Activated naive CD4-positive, alpha-beta T cell treated with anti-CD3 and anti-CD28 coated beads for 36 hours (primary cell): ENCODE measurements at regions of chr1 and their contacts with region 1.

Region 1: GRCh38 chr1:244272471-244273261 is 179.0 kb downstream of the ADSS2 start:
- DNase-seq: peak; percentile 84
- H3K4me3 Mint-ChIP-seq: no peak overlapping the region
- H3K27ac Mint-ChIP-seq: no peak overlapping the region
- H3K4me1 Mint-ChIP-seq: no peaks in the 10 kb centered on the region
- H3K27me3 Mint-ChIP-seq: no peaks in the 10 kb centered on the region

Region 2: GRCh38 chr1:243343970-243344937 is 928.4 kb before region 1 on chr1:
- CTCF ChIA-PET with region 1: interaction called, 13 read pairs
- intact Hi-C with region 1: loop called (anchors 1 kb)
- DNase-seq: no peak
- H3K4me3 Mint-ChIP-seq: no peak overlapping the region
- H3K27ac Mint-ChIP-seq: no peak overlapping the region
- H3K4me1 Mint-ChIP-seq: peaks cover 2% of the 10 kb centered on the region
- H3K27me3 Mint-ChIP-seq: no peaks in the 10 kb centered on the region

Region 3: GRCh38 chr1:243708210-243708609 is 564.5 kb before region 1 on chr1:
- CTCF ChIA-PET with region 1: interaction called, 5 read pairs
- intact Hi-C with region 1: loop called (anchors 1 kb)
- DNase-seq: no peak
- H3K4me3 Mint-ChIP-seq: no peak overlapping the region
- H3K27ac Mint-ChIP-seq: no peak overlapping the region
- H3K4me1 Mint-ChIP-seq: peaks cover 9% of the 10 kb centered on the region
- H3K27me3 Mint-ChIP-seq: no peaks in the 10 kb centered on the region

Region 4: DNA sequence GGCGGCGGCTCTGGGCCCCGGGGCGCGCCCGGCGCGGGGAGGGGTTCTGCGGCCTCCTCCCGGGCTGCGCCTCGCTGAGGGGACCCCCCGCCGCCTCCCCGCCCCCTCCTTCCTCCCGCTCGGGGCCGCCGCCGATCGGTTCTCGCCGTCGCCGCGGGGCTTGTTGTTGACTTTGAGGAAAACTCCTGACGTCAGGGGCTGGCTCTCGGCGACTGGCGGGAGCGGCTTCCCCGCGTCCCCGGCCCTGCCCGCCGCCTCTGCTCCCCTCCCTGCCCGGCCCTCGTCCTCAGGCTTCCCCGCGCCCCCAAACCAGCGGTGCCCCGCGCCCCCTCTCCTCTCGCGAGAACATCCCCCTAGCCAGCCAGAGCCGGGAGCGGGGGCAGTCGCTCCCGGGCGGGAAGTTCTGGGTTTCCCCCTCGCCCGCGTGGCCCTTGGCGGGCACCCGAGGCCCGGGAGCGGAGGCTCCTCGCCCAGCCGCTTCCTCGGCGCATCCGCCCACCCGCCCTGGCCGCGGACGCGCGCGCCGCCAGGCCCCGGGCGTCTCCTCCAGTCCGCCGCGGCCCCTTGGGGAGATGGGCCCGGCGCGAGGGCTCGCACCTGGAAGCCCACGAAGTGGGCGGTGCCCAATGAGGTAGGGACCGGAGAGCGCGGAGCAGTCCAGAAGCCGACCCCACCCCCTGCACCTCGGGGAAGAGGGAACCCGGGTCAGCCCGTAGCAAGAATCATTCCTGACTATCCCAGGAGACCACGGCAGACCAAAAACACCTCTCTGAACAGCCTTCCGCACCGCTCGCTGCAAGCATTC is 422.0 kb before region 1 on chr1:
- CTCF ChIA-PET with region 1: no interaction called
- intact Hi-C with region 1: loop called (anchors 1 kb)
- DNase-seq: peak; percentile 86
- H3K4me3 Mint-ChIP-seq: peak overlapping the region; percentile 80
- H3K27ac Mint-ChIP-seq: peak overlapping the region; percentile 81
- H3K4me1 Mint-ChIP-seq: peaks cover 30% of the 10 kb centered on the region
- H3K27me3 Mint-ChIP-seq: peaks cover 7% of the 10 kb centered on the region

Region 5: GRCh38 chr1:244118109-244118761 is 154.4 kb before region 1 on chr1:
- CTCF ChIA-PET with region 1: no interaction called
- intact Hi-C with region 1: loop called (anchors 5 kb)
- DNase-seq: no peak
- H3K4me3 Mint-ChIP-seq: no peak overlapping the region
- H3K27ac Mint-ChIP-seq: no peak overlapping the region
- H3K4me1 Mint-ChIP-seq: no peaks in the 10 kb centered on the region
- H3K27me3 Mint-ChIP-seq: no peaks in the 10 kb centered on the region